ENCODE measurements at regions of chr6 and their contacts with region 1.

Region 1: GRCh38 chr6:152124429-152125074 is 317.1 kb downstream of the ESR1 start:
- DNase-seq: peak in 1 of 2 experiments; percentile 47
- H3K4me3 ChIP-seq: no peak overlapping the region
- H3K27ac ChIP-seq: no peak overlapping the region
- H3K4me1 ChIP-seq: peaks cover 1% of the 10 kb centered on the region; the same call in 1 of the 2 replicates
- H3K27me3 ChIP-seq: no peaks in the 10 kb centered on the region
- CTCF ChIP-seq: peak; percentile 94

Region 2: DNA sequence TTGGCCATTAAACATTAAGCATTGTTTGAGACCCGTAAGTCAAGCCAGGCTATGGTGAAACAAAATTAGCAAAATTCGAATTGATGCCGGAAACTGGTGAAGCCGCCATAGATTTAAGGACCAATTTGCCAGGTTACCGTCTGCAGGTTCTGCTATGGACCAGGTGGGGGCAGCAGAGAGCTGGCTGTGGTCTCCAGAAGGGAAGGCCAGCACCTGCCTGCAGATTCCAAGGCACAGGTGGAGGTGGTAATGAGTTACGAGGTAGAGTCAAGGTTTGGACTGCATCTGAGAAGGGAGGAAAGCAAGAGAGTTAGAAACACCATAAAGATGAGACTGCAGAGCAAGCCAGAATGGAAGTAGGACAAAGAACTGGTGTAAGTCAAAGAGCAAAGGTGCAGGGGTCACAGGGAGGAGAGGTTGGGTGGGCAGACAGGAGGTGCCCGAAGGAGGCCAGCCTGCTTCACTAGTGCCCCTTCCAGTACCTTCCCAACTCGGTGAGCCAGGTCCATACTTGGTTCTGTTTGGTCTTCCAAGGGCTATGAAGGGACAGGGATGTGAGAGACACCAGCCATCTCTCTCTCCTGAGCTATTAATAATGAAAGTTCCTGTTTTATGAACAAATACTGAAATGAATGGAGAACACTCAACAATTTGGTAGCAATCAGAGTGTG is 448.7 kb before region 1 on chr6:
- CTCF ChIA-PET with region 1: no interaction called
- POLR2A ChIA-PET with region 1: no interaction called
- intact Hi-C with region 1: loop called (anchors 5 kb)
- DNase-seq: peak; percentile 28 to 46
- H3K4me3 ChIP-seq: no peak overlapping the region
- H3K27ac ChIP-seq: no peak overlapping the region
- H3K4me1 ChIP-seq: no peaks in the 10 kb centered on the region
- H3K27me3 ChIP-seq: no peaks in the 10 kb centered on the region
- CTCF ChIP-seq: peak; percentile 91

Region 3: DNA sequence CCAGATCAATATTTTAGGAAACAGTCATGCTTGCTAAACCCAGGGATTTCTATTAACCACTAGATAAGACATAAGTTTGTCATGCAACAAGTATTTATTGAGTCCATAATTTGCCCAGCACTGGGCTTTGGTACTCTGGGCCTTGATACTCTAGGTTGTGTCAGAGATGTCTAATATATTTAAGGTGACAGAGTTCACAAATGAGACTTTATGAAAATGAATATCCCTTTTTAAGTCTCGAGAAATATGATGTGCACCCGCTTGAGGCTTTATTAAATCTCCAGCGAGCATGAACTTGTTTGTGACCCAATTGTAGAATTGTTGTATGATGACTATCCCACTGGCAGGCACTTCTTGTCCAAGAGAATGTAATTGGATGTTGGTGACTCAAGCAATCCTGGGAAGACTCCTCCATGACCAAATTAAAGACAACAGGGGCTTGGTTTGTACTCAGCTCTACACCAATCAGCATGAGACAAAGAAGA is 207.8 kb before region 1 on chr6:
- CTCF ChIA-PET with region 1: interaction called, 3 read pairs
- POLR2A ChIA-PET with region 1: no interaction called
- intact Hi-C with region 1: loop called (anchors 5 kb)
- DNase-seq: peak in 1 of 2 experiments; percentile 79
- H3K4me3 ChIP-seq: no peak overlapping the region
- H3K27ac ChIP-seq: peak overlapping the region; percentile 81
- H3K4me1 ChIP-seq: peaks cover 42% of the 10 kb centered on the region
- H3K27me3 ChIP-seq: no peaks in the 10 kb centered on the region
- CTCF ChIP-seq: no peak